HEK293 (cell line): ENCODE measurements at regions of chr22 and their contacts with region 1.

Region 1: DNA sequence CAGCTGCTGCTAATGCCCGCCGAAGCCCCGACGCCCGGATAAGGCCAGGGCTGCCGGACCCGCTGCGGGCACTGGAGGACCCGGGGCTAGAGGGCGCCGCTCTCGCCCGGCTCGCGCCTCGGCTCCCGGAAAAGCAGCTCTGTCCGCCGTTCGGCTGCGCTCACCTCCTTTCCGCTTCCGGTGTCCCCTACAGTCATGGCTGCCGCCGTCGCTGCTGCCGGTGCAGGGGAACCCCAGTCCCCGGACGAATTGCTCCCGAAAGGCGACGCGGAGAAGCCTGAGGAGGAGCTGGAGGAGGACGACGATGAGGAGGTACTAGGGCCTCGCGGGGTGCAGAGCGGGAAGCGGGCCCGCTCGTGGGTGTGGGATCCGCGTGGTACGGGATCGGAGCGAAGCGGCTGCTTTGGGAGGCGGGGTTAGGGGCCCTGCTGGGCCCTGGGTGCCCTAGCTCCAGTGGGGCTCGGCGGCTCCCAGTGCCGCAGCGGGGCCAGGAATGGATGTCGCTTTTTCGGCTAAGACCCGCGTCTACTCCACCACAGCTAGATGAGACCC is at the start of gene TOMM22:
- H3K4me3 ChIP-seq: peak within 1 kb of the TSS; percentile 94
- H3K27ac ChIP-seq: peak within 1 kb of the TSS; percentile 5
- H3K4me1 ChIP-seq: no peaks in the 10 kb centered on the region
- CTCF ChIP-seq: peak; percentile 98

Region 2: DNA sequence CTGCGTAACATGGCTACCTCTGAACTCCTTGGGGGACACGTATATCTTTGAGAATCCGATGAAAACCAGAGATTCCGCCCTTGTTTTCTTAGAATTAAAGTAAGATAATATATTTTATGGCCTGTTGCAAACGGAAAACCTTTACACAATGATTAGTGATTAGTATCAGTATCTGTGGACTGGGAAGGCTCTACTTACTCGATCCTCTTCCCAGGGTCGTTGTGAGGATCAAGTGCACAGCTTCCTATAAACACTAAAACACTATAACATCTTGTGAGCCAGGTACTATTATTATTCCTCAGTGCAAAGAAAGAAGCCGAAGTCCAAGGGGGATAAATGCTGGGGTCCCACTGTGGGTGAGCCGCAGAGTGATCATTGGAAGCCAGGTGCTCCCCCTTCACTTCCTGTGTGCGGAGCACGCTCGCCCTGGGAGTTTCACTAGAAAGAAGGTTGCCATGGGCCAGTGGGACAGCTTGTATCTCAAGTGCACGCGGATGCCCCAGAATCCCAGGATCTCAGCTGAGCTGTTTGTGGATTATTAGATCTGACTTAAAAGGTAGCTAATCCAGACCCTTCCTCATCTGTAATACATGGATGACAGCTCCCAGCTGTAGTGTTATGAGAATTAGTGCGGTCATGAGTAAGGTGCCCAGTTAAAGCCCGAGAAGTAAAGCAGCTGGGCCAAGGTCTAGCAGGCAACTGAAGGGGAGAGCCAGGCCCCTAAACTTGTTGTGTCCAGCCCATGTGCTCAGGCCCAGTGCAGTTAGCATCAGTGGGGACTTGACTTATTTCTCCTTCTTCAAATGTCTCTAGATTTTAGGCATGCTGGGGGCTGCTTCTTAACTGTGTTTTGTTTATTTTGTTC is 24.6 kb before region 1 on chr22:
- CTCF ChIA-PET with region 1: interaction called, 3 read pairs
- POLR2A ChIA-PET with region 1: interaction called, 13 read pairs
- H3K4me3 ChIP-seq: peak overlapping the region; percentile 87
- H3K27ac ChIP-seq: peak overlapping the region; percentile 100; the same call in 1 of the 2 replicates
- H3K4me1 ChIP-seq: peaks cover 6% of the 10 kb centered on the region; the same call in 1 of the 2 replicates
- CTCF ChIP-seq: no peak

Region 3: DNA sequence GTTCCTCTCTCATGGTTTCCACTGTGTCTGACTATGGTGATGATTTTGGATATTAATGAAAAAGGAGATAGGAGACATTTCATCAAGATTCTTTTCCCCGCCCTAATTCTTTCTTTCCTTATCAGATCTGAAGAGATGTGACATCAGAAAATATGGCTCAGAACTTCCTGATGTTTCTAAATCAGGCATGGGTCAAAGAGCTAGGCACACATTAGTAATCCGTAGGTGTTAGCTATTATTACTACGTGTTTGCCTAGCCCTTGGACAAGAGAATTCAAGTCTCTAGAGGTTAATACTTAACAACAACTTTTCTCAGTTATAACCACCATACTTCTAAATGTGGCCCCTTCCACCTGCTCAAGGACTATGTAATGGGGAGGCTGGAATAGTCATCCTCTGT is 13.1 kb after region 1 on chr22:
- CTCF ChIA-PET with region 1: interaction called, 31 read pairs
- POLR2A ChIA-PET with region 1: interaction called, 60 read pairs
- H3K4me3 ChIP-seq: no peak overlapping the region
- H3K27ac ChIP-seq: no peak overlapping the region
- H3K4me1 ChIP-seq: peaks cover 3% of the 10 kb centered on the region; the same call in 1 of the 2 replicates
- CTCF ChIP-seq: no peak

Region 4: GRCh38 chr22:38700270-38700788 is 18.5 kb after region 1 on chr22:
- CTCF ChIA-PET with region 1: interaction called, 31 read pairs
- POLR2A ChIA-PET with region 1: interaction called, 60 read pairs
- H3K4me3 ChIP-seq: peak overlapping the region; percentile 76
- H3K27ac ChIP-seq: peak overlapping the region; percentile 93
- H3K4me1 ChIP-seq: peaks cover 7% of the 10 kb centered on the region; the same call in 1 of the 2 replicates
- CTCF ChIP-seq: no peak

Region 5: DNA sequence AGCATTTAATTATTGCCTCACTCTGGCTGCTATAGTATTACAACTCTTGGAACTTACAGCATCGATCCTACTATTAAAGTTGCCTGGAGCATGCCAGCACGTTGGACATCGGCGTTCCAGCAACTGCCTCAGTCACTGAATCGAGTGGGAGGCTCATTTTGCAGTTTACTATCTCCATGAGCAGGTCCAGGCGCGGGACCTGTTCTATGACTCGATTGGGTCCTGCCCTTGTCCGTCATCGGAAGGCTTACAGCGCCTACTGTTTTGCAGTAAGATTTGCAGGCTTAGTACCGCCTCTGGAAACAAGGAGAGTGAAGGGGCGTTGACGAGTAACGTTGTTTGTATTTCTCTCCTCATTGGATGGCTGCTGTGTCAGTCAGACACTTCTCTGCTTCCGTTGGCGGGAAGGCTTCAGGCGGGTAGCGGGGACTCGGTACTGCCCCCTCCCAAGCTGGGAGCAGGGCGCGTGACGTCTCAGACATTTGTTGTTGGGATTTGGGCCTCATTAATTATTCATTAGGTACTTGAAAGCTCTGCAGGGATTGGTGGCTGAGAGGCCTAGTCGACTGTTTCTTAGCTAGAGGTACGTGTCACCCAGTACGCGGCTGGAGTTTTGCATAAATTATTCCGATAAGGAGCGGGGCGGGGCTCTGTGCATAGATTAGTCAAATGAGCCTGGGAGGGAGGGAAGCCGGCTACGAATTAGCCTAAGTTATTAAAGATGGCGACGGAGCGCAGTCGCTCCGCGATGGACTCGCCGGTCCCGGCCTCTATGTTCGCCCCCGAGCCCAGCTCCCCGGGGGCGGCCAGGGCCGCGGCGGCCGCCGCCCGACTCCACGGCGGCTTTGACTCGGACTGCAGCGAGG is 23.6 kb after region 1 on chr22 and contains the start of gene GTPBP1:
- CTCF ChIA-PET with region 1: interaction called, 4 read pairs
- POLR2A ChIA-PET with region 1: interaction called, 60 read pairs
- H3K4me3 ChIP-seq: peak within 1 kb of the TSS; percentile 92
- H3K27ac ChIP-seq: peak within 1 kb of the TSS; percentile 94
- H3K4me1 ChIP-seq: peaks cover 13% of the 10 kb centered on the region
- CTCF ChIP-seq: peak; percentile 78